Mammary epithelial cell (primary cell): ENCODE measurements at regions of chr22 and their contacts with region 1.

Region 1: GRCh38 chr22:29663180-29663821 is 56.5 kb upstream of the CABP7 start:
- DNase-seq: peak; percentile 55
- H3K4me3 ChIP-seq: no peak overlapping the region
- H3K27ac ChIP-seq: no peak overlapping the region
- H3K4me1 ChIP-seq: peaks cover 35% of the 10 kb centered on the region
- H3K27me3 ChIP-seq: no peaks in the 10 kb centered on the region
- CTCF ChIP-seq: no peak

Region 2: DNA sequence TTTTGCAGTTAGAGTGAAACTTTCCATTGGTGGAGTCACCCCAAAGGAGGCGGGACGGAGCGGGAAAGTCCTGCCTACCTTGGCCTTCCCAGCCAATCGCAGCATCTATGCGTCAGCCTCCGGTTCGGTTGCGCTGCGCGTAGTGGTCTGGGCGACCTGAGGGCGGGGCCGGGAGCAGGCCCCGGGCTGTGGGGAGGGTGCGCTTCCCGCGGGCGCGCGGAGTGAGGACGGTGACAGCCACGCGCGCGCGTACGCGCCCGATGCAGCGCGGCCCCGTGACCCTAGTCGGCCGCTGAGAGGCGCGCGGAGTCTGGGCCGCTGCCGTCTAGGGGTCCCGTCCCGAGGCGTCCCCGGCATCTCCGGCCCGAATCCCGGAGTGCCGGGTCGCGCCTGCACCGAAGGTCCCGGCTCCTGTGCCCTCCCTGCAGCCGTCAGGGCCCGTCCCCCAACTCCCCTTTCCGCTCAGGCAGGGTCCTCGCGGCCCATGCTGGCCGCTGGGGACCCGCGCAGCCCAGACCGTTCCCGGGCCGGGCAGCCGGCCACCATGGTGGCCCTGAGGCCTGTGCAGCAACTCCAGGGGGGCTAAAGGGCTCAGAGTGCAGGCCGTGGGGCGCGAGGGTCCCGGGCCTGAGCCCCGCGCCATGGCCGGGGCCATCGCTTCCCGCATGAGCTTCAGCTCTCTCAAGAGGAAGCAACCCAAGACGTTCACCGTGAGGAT is 59.8 kb before region 1 on chr22 and contains the start of gene NF2:
- CTCF ChIA-PET with region 1: no interaction called
- dilution Hi-C with region 1: no loop called
- in situ Hi-C with region 1: no loop called
- intact Hi-C with region 1: loop called (anchors 10 kb)
- DNase-seq: peak; percentile 99
- H3K4me3 ChIP-seq: peak within 1 kb of the TSS; percentile 76 to 90 (median 86)
- H3K27ac ChIP-seq: peak within 1 kb of the TSS; percentile 78
- H3K4me1 ChIP-seq: peaks cover 10% of the 10 kb centered on the region
- H3K27me3 ChIP-seq: no peaks in the 10 kb centered on the region
- CTCF ChIP-seq: peak in 1 of 2 donors; percentile 9
- total RNA-seq, gene NF2: 95.2 to 138 TPM

Region 3: GRCh38 chr22:29701155-29701999 is 38.1 kb after region 1 on chr22:
- CTCF ChIA-PET with region 1: no interaction called
- dilution Hi-C with region 1: no loop called
- in situ Hi-C with region 1: no loop called
- intact Hi-C with region 1: no loop called
- DNase-seq: no peak
- H3K4me3 ChIP-seq: no peak overlapping the region
- H3K27ac ChIP-seq: no peak overlapping the region
- H3K4me1 ChIP-seq: no peaks in the 10 kb centered on the region
- H3K27me3 ChIP-seq: no peaks in the 10 kb centered on the region
- CTCF ChIP-seq: no peak